IMR-90 (cell line): ENCODE measurements at regions of chr6 and their contacts with region 1.

Region 1: GRCh38 chr6:36615018-36615761 is 21.0 kb downstream of the SRSF3 start:
- DNase-seq: peak; percentile 69
- ATAC-seq: peak; percentile 67
- H3K4me3 ChIP-seq: no peak overlapping the region
- H3K27ac ChIP-seq: no peak overlapping the region
- H3K4me1 ChIP-seq: no peaks in the 10 kb centered on the region
- H3K27me3 ChIP-seq: no peaks in the 10 kb centered on the region
- CTCF ChIP-seq: peak; percentile 93
- POLR2A ChIP-seq: 0 out of 2 replicates have a peak, but pooled peaks have one; percentile 38
- RAD21 ChIP-seq: peak; percentile 90

Region 2: DNA sequence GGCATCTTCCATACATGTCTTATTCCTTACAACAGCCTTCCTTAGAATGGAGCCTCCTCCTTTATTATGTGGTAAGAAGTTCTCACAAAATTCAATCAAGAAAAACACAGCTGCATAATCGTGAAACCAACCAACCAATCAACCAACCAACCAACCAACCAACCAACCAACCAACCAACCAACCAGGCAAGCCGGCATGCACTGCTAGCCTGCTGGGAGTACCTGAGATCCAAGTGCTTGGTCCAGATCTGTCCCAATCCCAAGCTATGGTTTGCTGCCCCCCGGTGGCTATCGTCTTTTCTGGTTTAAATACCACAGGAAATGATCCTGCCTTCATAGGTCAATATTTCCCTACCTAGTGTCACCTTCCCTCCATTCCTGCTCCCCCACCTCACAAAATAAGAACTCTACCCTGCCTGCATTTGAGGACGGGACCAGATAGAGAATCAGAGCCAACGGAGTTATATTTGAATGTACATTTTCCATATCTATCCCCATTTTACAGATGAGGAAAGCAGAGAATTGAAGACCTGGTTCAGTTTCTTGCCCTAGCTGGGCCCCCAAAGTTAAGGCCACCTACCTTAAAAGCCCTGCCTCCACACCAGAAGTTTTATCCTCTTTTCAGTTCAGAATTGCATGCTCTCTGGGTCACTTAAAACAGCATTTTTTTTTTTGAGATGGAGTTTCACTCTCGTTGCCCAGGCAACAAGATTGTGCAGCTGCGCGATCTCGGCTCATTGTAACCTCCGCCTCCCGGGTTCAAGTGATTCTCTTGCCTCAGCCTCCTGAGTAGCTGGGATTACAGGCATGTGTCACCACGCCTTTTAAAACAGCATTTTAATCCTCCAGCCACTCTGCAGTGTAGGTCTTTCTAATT is 109.6 kb after region 1 on chr6:
- CTCF ChIA-PET with region 1: interaction called, 15 read pairs
- POLR2A ChIA-PET with region 1: no interaction called
- dilution Hi-C with region 1: no loop called
- in situ Hi-C with region 1: loop called (anchors 5 kb)
- intact Hi-C with region 1: loop called (anchors 1 kb)
- DNase-seq: peak; percentile 65
- ATAC-seq: peak; percentile 90
- H3K4me3 ChIP-seq: no peak overlapping the region
- H3K27ac ChIP-seq: no peak overlapping the region
- H3K4me1 ChIP-seq: no peaks in the 10 kb centered on the region
- H3K27me3 ChIP-seq: peaks cover 8% of the 10 kb centered on the region; the same call in 1 of the 2 replicates
- CTCF ChIP-seq: peak; percentile 73
- POLR2A ChIP-seq: no peak
- RAD21 ChIP-seq: peak; percentile 80

Region 3: GRCh38 chr6:36759148-36759759 is 144.1 kb after region 1 on chr6:
- CTCF ChIA-PET with region 1: interaction called, 9 read pairs
- POLR2A ChIA-PET with region 1: no interaction called
- dilution Hi-C with region 1: no loop called
- in situ Hi-C with region 1: loop called (anchors 5 kb)
- intact Hi-C with region 1: loop called (anchors 1 kb)
- DNase-seq: peak; percentile 68
- ATAC-seq: peak; percentile 99
- H3K4me3 ChIP-seq: no peak overlapping the region
- H3K27ac ChIP-seq: no peak overlapping the region
- H3K4me1 ChIP-seq: no peaks in the 10 kb centered on the region
- H3K27me3 ChIP-seq: peaks cover 18% of the 10 kb centered on the region
- CTCF ChIP-seq: peak; percentile 98
- POLR2A ChIP-seq: no peak
- RAD21 ChIP-seq: peak; percentile 95